ENCODE measurements at regions of chr17 and their contacts with region 1.

Region 1: DNA sequence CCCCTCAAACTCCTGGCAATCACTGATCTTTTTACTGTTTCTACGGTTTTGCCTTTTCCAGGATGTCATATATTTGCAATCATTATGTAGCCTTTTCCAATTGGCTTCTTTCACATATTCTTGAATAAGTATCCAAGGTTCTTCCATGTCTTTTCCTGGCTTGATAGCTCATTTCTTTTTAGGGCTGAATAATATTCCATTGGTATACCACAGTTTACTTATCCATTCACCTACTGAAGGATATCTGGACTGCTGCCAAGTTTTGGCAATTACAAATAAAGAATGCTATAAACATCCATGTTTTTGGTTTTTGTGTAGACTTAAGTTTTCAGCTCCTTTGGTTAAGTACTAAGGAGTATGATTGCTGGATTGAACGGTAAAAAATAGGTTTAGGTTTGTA is 16.0 kb downstream of the GPATCH8 start:
- DNase-seq: no peak
- H3K4me3 ChIP-seq: no peak overlapping the region
- H3K27ac ChIP-seq: no peak overlapping the region
- H3K4me1 ChIP-seq: no peaks in the 10 kb centered on the region
- H3K27me3 ChIP-seq: no peaks in the 10 kb centered on the region
- CTCF ChIP-seq: no peak

Region 2: GRCh38 chr17:44432254-44433157 is 54.7 kb before region 1 on chr17:
- CTCF ChIA-PET with region 1: no interaction called
- dilution Hi-C with region 1: loop called (anchors 5 kb)
- in situ Hi-C with region 1: no loop called
- intact Hi-C with region 1: no loop called
- DNase-seq: no peak
- H3K4me3 ChIP-seq: no peak overlapping the region
- H3K27ac ChIP-seq: no peak overlapping the region
- H3K4me1 ChIP-seq: no peaks in the 10 kb centered on the region
- H3K27me3 ChIP-seq: no peaks in the 10 kb centered on the region
- CTCF ChIP-seq: no peak

Region 3: GRCh38 chr17:44672479-44673093 is 185.4 kb after region 1 on chr17:
- CTCF ChIA-PET with region 1: no interaction called
- dilution Hi-C with region 1: no loop called
- in situ Hi-C with region 1: no loop called
- intact Hi-C with region 1: no loop called
- DNase-seq: no peak
- H3K4me3 ChIP-seq: no peak overlapping the region
- H3K27ac ChIP-seq: no peak overlapping the region
- H3K4me1 ChIP-seq: no peaks in the 10 kb centered on the region
- H3K27me3 ChIP-seq: no peaks in the 10 kb centered on the region
- CTCF ChIP-seq: peak; percentile 63 to 68

Measured in mammary epithelial cell (primary cell).